ENCODE measurements at regions of chr9 and their contacts with region 1.

Region 1: DNA sequence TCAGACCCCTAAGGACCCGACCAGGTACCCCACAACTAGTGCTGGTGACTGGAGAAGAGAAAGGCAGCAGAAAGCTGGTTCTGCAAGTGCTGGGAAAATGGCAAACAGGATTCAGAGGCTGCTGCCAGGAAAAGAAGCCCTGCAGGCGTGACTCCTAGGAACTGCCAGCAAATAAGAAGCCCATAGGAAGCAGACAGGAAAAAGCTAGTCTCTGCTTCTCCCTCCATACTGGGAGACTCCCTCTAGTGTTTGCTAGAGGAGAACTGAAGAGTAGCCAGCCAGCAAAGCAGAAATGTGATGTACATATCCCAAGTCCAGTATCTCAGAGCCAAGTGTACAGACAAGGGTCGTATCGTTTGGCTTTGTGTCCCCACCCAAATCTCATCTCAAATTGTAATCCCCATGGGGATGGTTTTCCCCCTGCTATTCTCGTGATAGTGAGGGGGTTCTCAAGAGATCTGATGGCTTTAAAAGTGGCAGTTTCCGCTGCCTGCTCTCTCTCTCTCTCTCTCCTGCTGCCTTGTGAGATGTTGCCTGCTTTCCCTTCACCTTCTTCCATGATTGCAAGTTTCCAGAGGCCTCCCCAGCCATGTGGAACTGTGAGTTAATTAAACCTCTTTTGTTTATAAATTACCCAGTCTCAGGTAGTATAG is 38.1 kb upstream of the TUSC1 start:
- DNase-seq: no peak
- H3K4me3 ChIP-seq: no peak overlapping the region
- H3K4me3 Mint-ChIP-seq: no peak overlapping the region
- H3K27ac ChIP-seq: no peak overlapping the region
- H3K27ac Mint-ChIP-seq: no peak overlapping the region
- H3K4me1 ChIP-seq: no peaks in the 10 kb centered on the region
- H3K4me1 Mint-ChIP-seq: no peaks in the 10 kb centered on the region
- H3K27me3 ChIP-seq: no peaks in the 10 kb centered on the region
- H3K27me3 Mint-ChIP-seq: no peaks in the 10 kb centered on the region

Region 2: GRCh38 chr9:25658571-25658970 is 57.8 kb before region 1 on chr9:
- CTCF ChIA-PET with region 1: no interaction called
- POLR2A ChIA-PET with region 1: no interaction called
- intact Hi-C with region 1: loop called (anchors 10 kb)
- DNase-seq: no peak
- H3K4me3 ChIP-seq: no peak overlapping the region
- H3K4me3 Mint-ChIP-seq: no peak overlapping the region
- H3K27ac ChIP-seq: no peak overlapping the region
- H3K27ac Mint-ChIP-seq: no peak overlapping the region
- H3K4me1 ChIP-seq: no peaks in the 10 kb centered on the region
- H3K4me1 Mint-ChIP-seq: no peaks in the 10 kb centered on the region
- H3K27me3 ChIP-seq: no peaks in the 10 kb centered on the region
- H3K27me3 Mint-ChIP-seq: no peaks in the 10 kb centered on the region

Region 3: GRCh38 chr9:25733336-25733982 is 17.1 kb after region 1 on chr9:
- CTCF ChIA-PET with region 1: no interaction called
- POLR2A ChIA-PET with region 1: no interaction called
- intact Hi-C with region 1: no loop called
- DNase-seq: no peak
- H3K4me3 ChIP-seq: no peak overlapping the region
- H3K4me3 Mint-ChIP-seq: no peak overlapping the region
- H3K27ac ChIP-seq: no peak overlapping the region
- H3K27ac Mint-ChIP-seq: no peak overlapping the region
- H3K4me1 ChIP-seq: no peaks in the 10 kb centered on the region
- H3K4me1 Mint-ChIP-seq: no peaks in the 10 kb centered on the region
- H3K27me3 ChIP-seq: no peaks in the 10 kb centered on the region
- H3K27me3 Mint-ChIP-seq: no peaks in the 10 kb centered on the region